PC-9 (cell line): ENCODE measurements at regions of chr7 and their contacts with region 1.

Region 1: DNA sequence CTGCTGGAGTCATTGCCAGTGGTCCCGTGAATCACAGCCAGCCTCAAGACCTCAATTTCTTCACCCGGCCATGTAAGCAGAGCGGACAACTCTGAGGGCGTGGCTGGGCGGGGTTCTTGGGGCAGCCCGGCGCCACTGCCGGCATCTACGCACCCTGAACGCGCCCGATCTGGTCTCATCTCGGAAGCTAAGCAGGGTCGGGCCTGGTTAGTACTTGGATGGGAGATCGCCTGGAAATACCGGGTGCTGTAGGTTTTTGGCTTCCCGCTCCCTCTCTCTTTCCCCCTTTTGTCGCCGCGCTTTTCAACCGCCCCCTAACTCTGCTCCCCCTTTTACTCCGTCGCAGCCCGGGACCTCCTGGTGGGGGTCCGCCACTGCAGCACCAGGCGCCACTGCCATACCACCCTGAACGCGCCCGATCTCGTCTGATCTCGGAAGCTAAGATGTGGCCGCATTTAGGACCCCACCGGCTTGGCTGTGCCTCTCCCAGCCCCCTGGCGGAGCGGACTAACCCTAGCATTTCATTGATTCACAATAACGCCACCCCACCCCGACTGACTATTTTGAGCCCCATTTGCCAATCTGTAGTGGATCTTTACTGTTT is 25.3 kb downstream of the GARIN1A start:
- DNase-seq: peak in 1 of 2 experiments; percentile 59
- H3K4me3 ChIP-seq: no peak overlapping the region
- H3K27ac ChIP-seq: no peak overlapping the region
- H3K4me1 ChIP-seq: peaks cover 10% of the 10 kb centered on the region
- H3K27me3 ChIP-seq: no peaks in the 10 kb centered on the region
- CTCF ChIP-seq: no peak

Region 2: DNA sequence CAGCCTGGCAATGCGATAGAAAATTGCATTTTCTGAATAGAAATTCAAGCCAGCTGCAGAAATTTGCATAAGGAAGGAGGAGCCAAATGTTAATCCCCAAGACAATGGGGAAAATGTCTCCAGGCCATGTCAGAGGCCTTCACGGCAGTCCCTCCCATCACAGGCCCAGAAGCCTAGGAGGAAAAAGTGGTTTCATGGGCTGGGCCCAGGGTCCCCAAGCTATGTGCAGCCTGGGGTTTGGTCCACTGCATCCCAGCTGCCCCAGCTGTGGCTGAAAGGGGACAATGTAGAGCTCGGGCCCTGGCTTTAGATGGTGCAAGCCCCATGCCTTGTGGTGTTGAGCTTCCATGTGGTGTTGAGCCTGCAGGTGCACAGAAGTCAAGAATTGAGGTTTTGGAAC is 35.3 kb before region 1 on chr7:
- CTCF ChIA-PET with region 1: no interaction called
- POLR2A ChIA-PET with region 1: no interaction called
- intact Hi-C with region 1: loop called (anchors 5 kb)
- DNase-seq: no peak
- H3K4me3 ChIP-seq: no peak overlapping the region
- H3K27ac ChIP-seq: no peak overlapping the region
- H3K4me1 ChIP-seq: no peaks in the 10 kb centered on the region
- H3K27me3 ChIP-seq: no peaks in the 10 kb centered on the region
- CTCF ChIP-seq: no peak

Region 3: DNA sequence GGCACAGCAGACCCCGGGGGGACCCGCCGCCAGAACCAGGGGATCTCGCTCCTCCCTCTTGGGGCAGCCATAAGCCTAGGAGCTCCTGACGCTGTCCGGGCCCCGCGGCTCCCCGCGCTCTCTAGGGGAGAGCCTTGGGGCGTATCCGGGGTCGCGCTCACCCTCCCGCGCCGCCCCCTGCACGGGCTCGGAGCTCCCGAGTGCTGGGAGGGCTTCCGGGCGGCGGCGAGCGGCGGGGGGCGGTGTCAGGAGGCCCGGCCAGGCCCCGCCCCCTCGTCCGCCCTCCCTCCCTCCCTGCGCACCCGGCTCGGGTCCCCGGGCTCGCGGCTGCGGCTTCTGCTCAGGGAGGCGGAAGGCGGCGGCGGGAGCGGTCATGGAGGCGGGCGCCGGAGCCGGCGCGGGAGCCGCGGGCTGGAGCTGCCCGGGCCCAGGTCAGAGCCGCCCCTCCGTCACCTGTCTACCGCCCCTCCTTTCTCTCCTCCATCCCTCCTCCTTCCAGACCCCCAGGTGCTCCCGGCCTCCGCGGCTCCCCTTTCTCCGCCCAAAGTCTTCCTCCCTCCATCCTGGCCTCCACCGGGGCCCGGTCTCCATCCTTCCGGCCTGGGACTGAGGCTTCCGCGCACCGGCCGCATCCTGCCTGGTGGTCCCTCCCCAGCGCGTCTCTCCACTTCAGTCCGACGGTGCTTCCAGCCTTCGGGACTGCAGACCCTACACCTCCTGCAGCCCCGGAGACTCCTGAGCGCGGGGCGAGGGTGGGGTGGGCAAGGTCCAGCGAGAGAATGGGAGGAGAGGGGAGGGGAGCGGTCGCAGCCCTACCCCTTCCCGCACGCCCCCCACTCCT is 93.9 kb after region 1 on chr7:
- CTCF ChIA-PET with region 1: no interaction called
- POLR2A ChIA-PET with region 1: no interaction called
- intact Hi-C with region 1: no loop called
- DNase-seq: peak in 1 of 2 experiments; percentile 71
- H3K4me3 ChIP-seq: peak overlapping the region; percentile 65
- H3K27ac ChIP-seq: no peak overlapping the region
- H3K4me1 ChIP-seq: peaks cover 4% of the 10 kb centered on the region; the same call in 1 of the 2 replicates
- H3K27me3 ChIP-seq: no peaks in the 10 kb centered on the region
- CTCF ChIP-seq: no peak

Region 4: GRCh38 chr7:128940494-128941322 is 243.3 kb after region 1 on chr7:
- CTCF ChIA-PET with region 1: no interaction called
- POLR2A ChIA-PET with region 1: no interaction called
- intact Hi-C with region 1: no loop called
- DNase-seq: no peak
- H3K4me3 ChIP-seq: no peak overlapping the region
- H3K27ac ChIP-seq: no peak overlapping the region
- H3K4me1 ChIP-seq: no peaks in the 10 kb centered on the region
- H3K27me3 ChIP-seq: peaks cover 13% of the 10 kb centered on the region
- CTCF ChIP-seq: no peak

Region 5: DNA sequence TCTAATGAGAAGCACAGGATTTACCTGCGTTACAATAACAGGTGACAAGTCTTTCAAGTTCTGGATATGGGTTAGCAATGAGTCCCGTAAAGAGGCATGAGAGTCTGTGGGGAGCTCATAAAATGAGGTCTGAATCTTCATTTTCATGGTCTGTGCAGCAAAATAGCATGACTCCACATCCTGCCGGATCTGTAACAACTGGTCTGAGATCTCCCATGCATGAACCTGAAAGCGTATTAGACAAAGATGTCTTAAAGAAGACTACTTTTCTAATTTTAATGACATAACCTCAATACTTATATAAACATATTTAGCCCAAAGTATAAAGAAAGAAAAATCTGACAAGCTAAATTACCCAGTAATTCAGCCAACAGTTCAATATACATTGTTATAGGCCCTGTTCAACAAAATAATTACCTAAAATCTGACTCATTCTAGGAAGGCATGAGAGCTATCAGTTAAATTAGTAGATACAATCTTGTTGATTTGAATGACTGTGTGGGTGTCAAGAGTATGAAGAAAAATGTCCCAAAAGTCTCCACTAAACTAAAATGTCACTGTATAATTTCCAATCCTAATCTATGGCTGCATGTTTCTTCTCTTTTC is 320.6 kb after region 1 on chr7:
- CTCF ChIA-PET with region 1: no interaction called
- POLR2A ChIA-PET with region 1: no interaction called
- intact Hi-C with region 1: no loop called
- DNase-seq: no peak
- H3K4me3 ChIP-seq: no peak overlapping the region
- H3K27ac ChIP-seq: no peak overlapping the region
- H3K4me1 ChIP-seq: peaks cover 21% of the 10 kb centered on the region; the same call in 1 of the 2 replicates
- H3K27me3 ChIP-seq: no peaks in the 10 kb centered on the region
- CTCF ChIP-seq: no peak